ENCODE measurements at regions of chr17 and their contacts with region 1.

Region 1: GRCh38 chr17:30093463-30094147 is 23.0 kb upstream of the NSRP1 start:
- DNase-seq: peak in 1 of 2 experiments; percentile 81
- H3K4me3 ChIP-seq: no peak overlapping the region
- H3K27ac ChIP-seq: no peak overlapping the region
- H3K4me1 ChIP-seq: no peaks in the 10 kb centered on the region
- H3K27me3 ChIP-seq: no peaks in the 10 kb centered on the region
- CTCF ChIP-seq: peak; percentile 18 to 87 (median 76)
- EP300 ChIP-seq: no peak
- POLR2A ChIP-seq: no peak
- RAD21 ChIP-seq: peak; percentile 93 to 96

Region 2: GRCh38 chr17:29640413-29640812 is 453.2 kb before region 1 on chr17:
- CTCF ChIA-PET with region 1: interaction called, 13 read pairs
- POLR2A ChIA-PET with region 1: no interaction called
- DNase-seq: no peak
- H3K4me3 ChIP-seq: no peak overlapping the region
- H3K27ac ChIP-seq: no peak overlapping the region
- H3K4me1 ChIP-seq: peaks cover 0 to 10% (median 3%) of the 10 kb centered on the region in 4 experiments; a peak in 3 of 7 replicates
- H3K27me3 ChIP-seq: no peaks in the 10 kb centered on the region
- CTCF ChIP-seq: no peak
- EP300 ChIP-seq: no peak
- POLR2A ChIP-seq: no peak
- RAD21 ChIP-seq: no peak

Region 3: DNA sequence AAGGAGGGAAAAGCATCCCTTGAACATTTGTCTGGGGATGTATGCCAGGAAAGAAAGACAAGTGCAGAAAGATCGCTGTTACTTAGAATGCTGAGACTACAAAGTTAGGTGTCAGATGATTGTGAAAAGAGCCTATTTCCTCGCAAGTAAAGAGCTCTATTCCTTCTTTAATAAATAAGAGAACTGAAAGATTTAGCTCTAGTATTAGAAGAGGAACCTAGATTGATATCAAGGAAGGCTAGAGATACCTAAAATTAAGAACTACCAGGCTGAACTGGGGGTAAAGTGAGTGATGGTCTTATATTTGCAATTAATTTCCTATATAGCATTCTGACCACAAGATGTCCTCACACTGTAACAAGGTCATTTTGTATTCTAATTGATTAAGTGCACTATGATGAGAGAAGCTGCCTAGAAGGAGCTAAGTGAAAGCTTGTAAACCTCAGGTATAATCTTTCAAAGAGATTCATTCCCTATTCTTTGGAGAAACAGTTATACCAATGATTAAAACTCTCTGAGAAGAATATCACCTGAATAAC is 225.9 kb before region 1 on chr17:
- CTCF ChIA-PET with region 1: interaction called, 17 read pairs
- POLR2A ChIA-PET with region 1: no interaction called
- DNase-seq: no peak
- H3K4me3 ChIP-seq: no peak overlapping the region
- H3K27ac ChIP-seq: no peak overlapping the region
- H3K4me1 ChIP-seq: peaks cover 0 to 6% (median 3%) of the 10 kb centered on the region in 4 experiments; a peak in 6 of 7 replicates
- H3K27me3 ChIP-seq: no peaks in the 10 kb centered on the region
- CTCF ChIP-seq: peak in 2 of 3 experiments; percentile 9 to 10; a peak in 2 of 4 replicates
- EP300 ChIP-seq: no peak
- POLR2A ChIP-seq: no peak
- RAD21 ChIP-seq: peak in 1 of 2 experiments; percentile 24; a peak in 2 of 4 replicates

Region 4: DNA sequence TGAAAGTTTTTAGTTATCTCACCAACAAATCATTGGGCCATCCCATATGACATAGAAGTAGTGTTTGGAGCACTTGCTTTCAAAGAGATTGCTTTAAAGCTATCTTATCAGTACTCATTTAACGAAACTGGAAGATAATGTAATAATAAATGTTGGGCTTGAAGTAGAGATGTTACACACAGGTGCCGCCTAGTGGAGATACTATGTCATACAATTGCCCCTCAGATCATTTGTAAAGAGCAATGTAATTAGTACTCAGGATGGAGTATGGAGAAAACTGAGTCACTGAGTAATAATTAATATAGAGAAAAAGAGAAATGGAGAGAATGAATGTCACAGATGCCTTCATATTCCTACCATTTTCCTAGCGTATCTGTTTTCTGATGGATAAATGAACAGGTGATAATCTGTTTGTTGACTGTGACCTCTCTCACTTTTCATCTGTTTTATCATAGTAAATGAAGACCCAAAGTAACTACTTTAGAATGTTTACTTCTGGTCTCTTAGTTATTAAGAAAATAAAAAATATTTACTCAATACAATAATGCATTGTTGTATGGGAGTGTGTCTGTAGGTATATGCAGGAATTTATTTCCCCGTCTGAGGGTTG is 71.8 kb before region 1 on chr17:
- CTCF ChIA-PET with region 1: interaction called, 12 read pairs
- POLR2A ChIA-PET with region 1: no interaction called
- DNase-seq: no peak
- H3K4me3 ChIP-seq: no peak overlapping the region
- H3K27ac ChIP-seq: no peak overlapping the region
- H3K4me1 ChIP-seq: no peaks in the 10 kb centered on the region
- H3K27me3 ChIP-seq: no peaks in the 10 kb centered on the region
- CTCF ChIP-seq: peak in 2 of 3 experiments; percentile 53 to 72; a peak in 2 of 4 replicates
- EP300 ChIP-seq: no peak
- POLR2A ChIP-seq: no peak
- RAD21 ChIP-seq: peak; percentile 67 to 70

Region 5: GRCh38 chr17:30041551-30041950 is 52.1 kb before region 1 on chr17:
- CTCF ChIA-PET with region 1: interaction called, 10 read pairs
- POLR2A ChIA-PET with region 1: no interaction called
- DNase-seq: no peak
- H3K4me3 ChIP-seq: no peak overlapping the region
- H3K27ac ChIP-seq: no peak overlapping the region
- H3K4me1 ChIP-seq: no peaks in the 10 kb centered on the region
- H3K27me3 ChIP-seq: no peaks in the 10 kb centered on the region
- CTCF ChIP-seq: no peak
- EP300 ChIP-seq: no peak
- POLR2A ChIP-seq: no peak
- RAD21 ChIP-seq: no peak

Region 6: DNA sequence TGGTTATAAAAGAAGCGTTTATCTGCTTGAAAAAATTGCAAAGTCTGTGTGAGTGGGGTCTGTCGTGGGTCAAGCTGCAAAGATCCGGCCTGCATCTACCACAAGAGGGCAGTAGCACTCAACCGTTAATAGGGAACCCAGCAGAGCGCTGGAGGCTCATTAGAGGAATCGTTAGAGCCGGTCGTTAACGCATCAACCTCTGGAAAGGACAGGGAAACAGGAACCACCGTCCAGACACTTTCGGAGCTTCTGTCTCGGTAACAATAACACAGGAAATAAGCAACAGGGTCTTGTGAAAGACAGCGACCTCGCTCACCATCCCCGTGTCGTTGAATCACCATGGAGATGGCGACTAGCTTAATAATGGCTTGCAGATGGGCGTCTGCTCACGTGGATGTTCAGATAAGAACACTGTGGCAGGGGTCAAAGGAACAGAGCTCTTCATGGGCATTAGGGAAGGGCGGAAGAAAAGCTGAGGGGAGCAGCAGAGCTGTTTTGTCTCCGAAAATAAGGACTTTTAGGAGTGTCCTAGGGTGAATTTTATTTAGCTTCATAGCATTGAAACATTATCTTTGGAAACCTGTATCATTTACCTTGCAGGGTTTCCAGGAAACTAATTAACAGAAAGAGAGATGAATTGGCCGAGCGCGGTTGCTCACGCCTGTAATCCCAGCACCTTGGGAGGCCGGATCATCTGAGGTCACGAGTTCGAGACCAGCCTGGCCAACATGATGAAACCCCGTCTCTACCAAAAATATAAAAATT is 11.2 kb after region 1 on chr17:
- CTCF ChIA-PET with region 1: interaction called, 67 read pairs
- POLR2A ChIA-PET with region 1: interaction called, 5 read pairs
- DNase-seq: peak; percentile 56 to 77
- H3K4me3 ChIP-seq: peak overlapping the region; percentile 28 to 61 (median 52); a peak in 7 of 8 replicates
- H3K27ac ChIP-seq: no peak overlapping the region
- H3K4me1 ChIP-seq: no peaks in the 10 kb centered on the region
- H3K27me3 ChIP-seq: no peaks in the 10 kb centered on the region
- CTCF ChIP-seq: peak; percentile 80 to 88 (median 81)
- EP300 ChIP-seq: no peak
- POLR2A ChIP-seq: peak; percentile 37 to 47; a peak in 2 of 3 replicates
- RAD21 ChIP-seq: peak; percentile 79 to 86

Measured in H1 (cell line).